Activated CD4-positive, alpha-beta T cell treated with anti-CD3 and anti-CD28 coated beads, Interleukin-2, amount 10 ng/mL, durations not matched to agents 24 days and 14 days (primary cell): ENCODE measurements at regions of chr2 and their contacts with region 1.

Region 1: DNA sequence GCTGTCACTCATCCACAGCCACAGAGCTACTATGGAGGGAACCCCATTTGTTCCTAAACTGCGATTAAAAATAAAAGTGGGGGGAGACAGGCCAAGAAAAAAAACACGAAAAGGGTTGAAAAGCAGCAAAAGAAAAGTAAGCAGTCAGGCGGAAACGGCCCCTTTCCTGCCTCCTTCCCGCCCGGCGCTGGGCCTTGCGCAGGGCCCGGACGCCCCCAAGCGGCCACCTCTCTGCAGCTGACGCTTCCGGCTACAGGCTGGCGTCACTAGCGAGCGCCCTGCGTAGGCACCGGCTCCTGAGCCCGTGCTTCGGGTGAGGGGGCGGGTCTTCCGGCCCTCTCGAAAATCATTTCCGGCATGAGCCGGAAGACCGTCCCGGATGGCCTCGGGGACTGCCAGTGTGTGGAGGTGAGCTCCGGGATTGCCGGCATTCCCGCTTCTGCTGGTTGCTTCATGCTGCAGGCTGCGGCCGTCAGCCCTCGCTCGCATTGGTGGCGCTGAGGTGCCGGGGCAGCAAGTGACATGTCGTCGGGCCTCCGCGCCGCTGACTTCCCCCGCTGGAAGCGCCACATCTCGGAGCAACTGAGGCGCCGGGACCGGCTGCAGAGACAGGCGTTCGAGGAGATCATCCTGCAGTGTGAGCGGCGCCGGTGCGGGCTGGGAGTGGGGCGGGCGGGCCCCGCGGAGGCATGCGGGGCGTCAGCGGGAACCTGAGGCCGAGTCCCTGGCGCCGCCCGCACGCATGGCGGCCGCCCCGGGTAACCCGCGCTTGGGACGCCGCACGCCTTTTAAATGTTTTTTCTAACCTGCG is at the start of gene ATG16L1:
- DNase-seq: peak; percentile 99
- H3K4me3 Mint-ChIP-seq: peak within 1 kb of the TSS; percentile 87
- H3K27ac Mint-ChIP-seq: peak within 1 kb of the TSS; percentile 97
- H3K4me1 Mint-ChIP-seq: peaks cover 58% of the 10 kb centered on the region
- H3K27me3 Mint-ChIP-seq: no peaks in the 10 kb centered on the region
- total RNA-seq, gene ATG16L1: 36.7 and 37.9 TPM in 2 replicates

Region 2: GRCh38 chr2:232611551-232612218 is 639.8 kb before region 1 on chr2:
- intact Hi-C with region 1: loop called (anchors 1 kb)
- DNase-seq: peak; percentile 91
- H3K4me3 Mint-ChIP-seq: no peak overlapping the region
- H3K27ac Mint-ChIP-seq: no peak overlapping the region
- H3K4me1 Mint-ChIP-seq: no peaks in the 10 kb centered on the region
- H3K27me3 Mint-ChIP-seq: peaks cover 5% of the 10 kb centered on the region

Region 3: GRCh38 chr2:232781765-232782164 is 469.7 kb before region 1 on chr2:
- intact Hi-C with region 1: loop called (anchors 10 kb)
- DNase-seq: peak; percentile 79
- H3K4me3 Mint-ChIP-seq: peak overlapping the region; percentile 26
- H3K27ac Mint-ChIP-seq: peak overlapping the region; percentile 57
- H3K4me1 Mint-ChIP-seq: peaks cover 10% of the 10 kb centered on the region
- H3K27me3 Mint-ChIP-seq: no peaks in the 10 kb centered on the region

Region 4: GRCh38 chr2:232852676-232853075 is 398.8 kb before region 1 on chr2:
- intact Hi-C with region 1: loop called (anchors 1 kb)
- DNase-seq: no peak
- H3K4me3 Mint-ChIP-seq: no peak overlapping the region
- H3K27ac Mint-ChIP-seq: peak overlapping the region; percentile 22
- H3K4me1 Mint-ChIP-seq: peaks cover 4% of the 10 kb centered on the region
- H3K27me3 Mint-ChIP-seq: no peaks in the 10 kb centered on the region

Region 5: DNA sequence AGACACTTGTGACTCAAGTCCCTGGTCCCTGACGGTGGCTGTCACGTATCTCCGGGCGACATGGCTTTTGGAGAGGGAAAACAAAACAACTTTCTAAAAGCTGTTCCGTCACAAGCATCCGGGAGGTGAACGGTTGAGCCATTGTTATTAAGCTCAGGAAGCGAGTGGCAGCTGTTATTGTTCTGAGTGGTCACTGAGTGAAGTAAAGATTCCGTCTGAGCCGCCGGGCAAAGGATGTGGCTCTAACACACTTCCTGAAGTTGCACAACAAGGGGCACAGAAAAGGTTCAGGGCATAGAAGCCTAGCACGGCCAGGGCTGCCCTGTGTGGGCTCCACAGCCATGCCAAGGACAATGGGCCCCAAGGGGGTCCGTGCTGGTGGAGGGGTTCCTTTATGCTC is 167.0 kb before region 1 on chr2:
- intact Hi-C with region 1: loop called (anchors 1 kb)
- DNase-seq: peak; percentile 83
- H3K4me3 Mint-ChIP-seq: peak overlapping the region; percentile 64
- H3K27ac Mint-ChIP-seq: peak overlapping the region; percentile 82
- H3K4me1 Mint-ChIP-seq: peaks cover 69% of the 10 kb centered on the region
- H3K27me3 Mint-ChIP-seq: no peaks in the 10 kb centered on the region

Region 6: DNA sequence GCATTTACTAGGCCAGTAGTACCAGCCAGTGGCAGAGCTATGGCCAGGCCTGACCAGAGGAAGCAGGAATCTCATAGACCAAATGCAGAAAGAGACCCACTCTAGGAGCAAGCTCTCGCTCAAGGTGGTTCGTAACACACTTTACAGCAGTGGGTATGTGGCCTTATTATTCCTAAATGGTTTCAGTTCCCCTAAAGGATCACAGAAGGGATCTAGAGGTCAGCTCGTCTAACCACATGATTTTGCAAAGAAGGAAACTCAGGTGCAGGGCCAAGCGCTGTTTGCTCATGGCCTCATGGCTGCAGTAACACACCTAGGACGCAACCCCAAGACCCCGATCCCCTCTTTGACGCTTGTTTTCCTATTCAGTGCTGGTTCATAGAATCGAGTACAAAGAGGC is 65.5 kb before region 1 on chr2:
- intact Hi-C with region 1: loop called (anchors 10 kb)
- DNase-seq: no peak
- H3K4me3 Mint-ChIP-seq: no peak overlapping the region
- H3K27ac Mint-ChIP-seq: no peak overlapping the region
- H3K4me1 Mint-ChIP-seq: peaks cover 3% of the 10 kb centered on the region
- H3K27me3 Mint-ChIP-seq: no peaks in the 10 kb centered on the region

Region 7: GRCh38 chr2:233217892-233218377 is 33.6 kb before region 1 on chr2:
- intact Hi-C with region 1: no loop called
- DNase-seq: no peak
- H3K4me3 Mint-ChIP-seq: no peak overlapping the region
- H3K27ac Mint-ChIP-seq: no peak overlapping the region
- H3K4me1 Mint-ChIP-seq: no peaks in the 10 kb centered on the region
- H3K27me3 Mint-ChIP-seq: no peaks in the 10 kb centered on the region

Region 8: DNA sequence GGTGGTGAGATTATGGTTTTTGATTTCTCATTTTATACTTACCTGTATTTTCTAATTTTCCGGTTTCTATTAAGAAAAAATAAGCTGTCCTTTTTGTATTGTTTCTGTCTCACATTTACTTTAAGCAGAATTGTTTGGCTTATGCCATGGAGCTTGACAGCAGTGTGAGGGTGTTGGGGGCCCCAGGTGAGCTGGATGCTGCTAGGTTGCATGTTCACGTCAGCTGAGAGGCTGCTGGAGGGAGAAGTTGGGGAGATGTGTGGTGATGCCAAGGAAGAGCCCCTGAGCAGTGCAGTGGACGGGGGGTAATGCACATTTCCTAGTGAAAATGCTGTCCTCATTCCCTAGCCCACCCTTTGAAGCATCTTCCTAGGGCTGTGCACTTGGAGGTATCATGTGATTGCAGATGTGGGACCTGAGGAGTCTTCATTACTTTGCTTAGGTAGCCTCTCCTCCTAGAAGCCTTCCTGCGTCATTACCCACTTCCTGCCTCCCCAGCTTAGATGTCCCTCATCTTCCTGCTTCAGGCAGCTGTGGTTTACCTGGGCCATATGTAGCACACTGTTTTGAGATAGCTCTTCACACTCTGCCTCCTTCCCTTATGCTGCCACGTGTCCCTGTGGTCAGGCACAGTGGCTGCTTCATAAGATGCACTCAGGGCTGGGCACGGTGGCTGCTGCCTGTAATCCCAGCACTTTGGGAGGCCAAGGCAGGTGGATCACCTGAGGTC is 16.2 kb after region 1 on chr2:
- intact Hi-C with region 1: loop called (anchors 1 kb)
- DNase-seq: peak; percentile 95
- H3K4me3 Mint-ChIP-seq: peak overlapping the region; percentile 84
- H3K27ac Mint-ChIP-seq: peak overlapping the region; percentile 97
- H3K4me1 Mint-ChIP-seq: peaks cover 62% of the 10 kb centered on the region
- H3K27me3 Mint-ChIP-seq: no peaks in the 10 kb centered on the region